Dorsolateral prefrontal cortex (tissue), 120 donors: ENCODE measurements at regions of chr5 and their contacts with region 1.

Region 1: DNA sequence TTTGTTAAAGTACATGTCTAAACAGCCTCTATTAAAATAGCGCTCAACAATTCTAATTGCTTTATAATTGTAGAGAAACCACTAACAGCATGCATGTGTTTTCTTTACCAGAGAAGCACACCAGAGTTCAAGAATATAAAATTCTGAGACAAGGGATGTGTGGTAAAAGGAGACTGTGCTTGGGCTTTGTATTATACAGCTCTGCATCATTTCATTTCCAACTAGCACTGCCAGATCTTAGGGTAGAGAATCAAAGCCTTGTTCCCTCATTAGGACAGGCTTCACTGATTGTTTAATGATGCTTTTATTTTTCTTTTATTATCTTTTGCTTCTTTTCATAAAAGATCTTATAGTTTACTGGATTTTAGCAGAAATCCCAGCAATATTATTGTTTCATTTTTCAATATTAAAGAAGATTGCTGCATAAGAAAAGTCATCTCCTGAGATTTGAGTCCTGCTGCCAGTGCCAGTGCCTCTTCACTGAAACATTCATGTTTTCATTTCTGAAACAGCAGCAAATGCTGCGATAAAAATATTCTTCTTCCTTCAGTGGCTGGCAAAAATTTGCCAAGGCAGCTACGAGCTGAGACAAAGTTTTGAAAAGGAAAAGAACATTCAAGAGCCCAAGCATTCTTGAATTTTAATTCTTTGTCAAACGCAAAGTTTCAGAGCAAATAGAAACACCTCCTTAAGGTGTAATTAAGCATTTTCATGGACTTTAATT is 491.0 kb upstream of the PIK3R1 start:
- DNase-seq: peak in 2 of 10 donors; percentile 21 to 30
- H3K4me3 ChIP-seq: peak overlapping the region in 24 of 59 donors; percentile 3 to 47 (median 20)
- H3K27ac ChIP-seq: peak overlapping the region in 57 of 59 donors; percentile 3 to 87 (median 70)
- H3K27me3 ChIP-seq: no peaks in the 10 kb centered on the region
- CTCF ChIP-seq: no peak

Region 2: DNA sequence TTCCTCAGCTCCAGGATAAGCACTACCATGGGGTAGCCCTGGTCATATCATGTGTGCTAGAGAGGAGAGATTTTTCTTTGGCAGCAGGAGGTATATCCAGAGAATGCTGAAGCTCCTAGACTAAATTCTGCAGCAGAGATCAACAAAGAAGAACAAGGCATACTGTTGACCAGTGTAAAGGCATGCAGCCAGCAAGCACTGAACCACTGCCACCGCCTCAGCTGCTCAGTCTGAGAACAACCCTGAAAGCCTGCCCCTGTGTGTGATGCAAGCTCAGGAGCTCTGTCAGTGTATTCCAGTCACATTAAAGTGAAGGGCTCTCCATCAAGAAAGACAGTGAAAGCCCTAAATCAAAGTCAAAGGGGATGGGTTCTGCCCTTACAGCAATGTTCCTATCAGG is 88.5 kb before region 1 on chr5:
- intact Hi-C with region 1: loop called in 1 of 2 experiments (anchors 5 kb)
- DNase-seq: peak; percentile 38 to 80 (median 69)
- H3K4me3 ChIP-seq: no peak overlapping the region
- H3K27ac ChIP-seq: peak overlapping the region in 16 of 59 donors; percentile 3 to 67 (median 39)
- H3K27me3 ChIP-seq: no peaks in the 10 kb centered on the region
- CTCF ChIP-seq: no peak

Region 3: DNA sequence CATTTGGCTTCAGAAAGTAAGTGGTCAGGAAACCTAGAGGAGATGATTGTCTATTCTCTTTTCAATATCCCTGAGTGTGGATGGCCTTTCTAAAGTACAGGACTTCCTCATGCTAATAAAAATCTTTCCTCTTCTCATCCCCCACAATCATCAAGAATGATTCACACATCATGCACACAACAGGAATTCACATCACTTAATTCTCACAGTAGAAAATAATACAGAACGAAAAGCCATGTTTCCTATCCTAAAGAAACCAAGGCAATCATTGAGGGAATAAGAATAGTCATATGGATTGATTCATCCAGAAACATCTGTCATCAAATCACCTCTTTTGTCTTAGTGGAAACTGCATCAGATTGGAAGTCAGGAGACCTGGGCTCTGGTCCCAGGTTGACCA is 287.9 kb after region 1 on chr5:
- intact Hi-C with region 1: no loop called
- DNase-seq: no peak
- H3K4me3 ChIP-seq: no peak overlapping the region
- H3K27ac ChIP-seq: no peak overlapping the region
- H3K27me3 ChIP-seq: no peaks in the 10 kb centered on the region
- CTCF ChIP-seq: no peak